ENCODE measurements at regions of chr2 and their contacts with region 1.

Region 1: DNA sequence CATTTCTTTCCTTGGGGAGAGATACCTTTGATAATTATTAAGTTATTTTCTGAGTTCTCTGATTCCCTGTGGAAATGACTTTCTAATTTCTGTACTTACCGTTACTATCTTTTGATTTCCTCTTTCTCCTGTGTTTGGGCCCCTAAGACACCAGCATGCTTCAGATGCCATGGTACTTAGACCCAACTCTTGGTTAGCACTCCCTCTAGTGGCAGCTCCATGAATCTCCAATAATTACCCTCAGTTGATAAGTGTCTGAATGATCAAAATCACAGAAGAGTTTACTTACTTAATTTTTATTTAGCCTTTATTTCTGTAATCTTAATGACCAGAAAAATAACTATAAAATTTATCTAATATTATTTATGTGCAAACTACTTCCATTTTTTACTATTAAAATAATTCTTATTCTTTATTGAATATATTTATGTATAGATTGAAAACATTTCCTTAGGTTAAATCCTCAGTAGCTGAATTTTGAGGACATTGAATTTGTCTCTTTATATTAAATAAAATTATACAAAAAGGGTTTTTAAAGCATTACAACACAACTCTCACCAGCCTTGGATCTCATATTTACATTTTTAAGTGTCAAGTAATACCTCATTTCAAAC is 300.4 kb downstream of the KCNS3 start:
- DNase-seq: peak; percentile 79
- ATAC-seq: peak; percentile 59; the same call in 1 of the 2 replicates
- H3K4me3 ChIP-seq: no peak overlapping the region
- H3K27ac ChIP-seq: peak overlapping the region; percentile 85; the same call in 1 of the 2 replicates
- H3K4me1 ChIP-seq: peaks cover 19% of the 10 kb centered on the region
- H3K27me3 ChIP-seq: no peaks in the 10 kb centered on the region
- CTCF ChIP-seq: peak; percentile 80

Region 2: DNA sequence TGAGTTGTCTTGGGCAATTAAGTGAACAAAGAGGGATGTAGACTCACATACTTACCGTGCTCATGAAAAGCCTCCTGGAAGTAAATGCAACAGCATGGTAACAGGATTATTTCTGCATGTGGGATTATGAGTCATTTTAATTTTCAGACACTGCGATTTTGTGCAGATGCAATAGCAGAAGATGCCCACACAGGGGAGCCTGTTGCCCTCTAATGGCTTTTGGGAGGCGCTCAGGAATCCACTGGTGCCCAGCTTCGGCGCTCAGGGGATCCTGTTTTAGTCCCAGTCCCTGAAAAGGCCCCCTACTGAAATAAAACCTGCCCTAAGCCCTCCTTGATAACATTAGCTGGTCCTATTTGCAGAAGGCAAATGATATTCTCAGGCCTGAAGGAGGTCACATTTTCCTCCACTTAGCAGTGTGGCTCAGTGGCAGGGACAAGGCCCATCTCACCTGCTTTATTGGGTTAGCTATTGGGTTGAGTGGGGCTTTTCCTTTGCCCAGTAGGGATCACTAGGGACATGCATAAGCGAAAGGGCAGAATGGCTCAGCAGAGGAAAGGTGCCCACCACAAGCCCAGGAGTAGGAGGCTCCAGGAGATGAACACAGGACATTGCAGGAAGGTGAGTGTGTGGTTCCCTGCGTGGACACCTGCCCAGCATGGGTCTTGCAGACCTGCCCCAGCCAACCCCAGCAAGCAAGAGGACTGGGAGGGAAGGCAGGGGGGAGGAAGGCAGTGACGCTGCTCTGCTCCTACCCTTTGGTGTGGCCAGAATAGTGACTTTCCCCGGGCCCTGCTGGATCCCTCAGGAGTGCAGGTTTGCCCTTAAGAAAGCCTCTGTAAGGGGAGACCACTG is 326.9 kb before region 1 on chr2:
- CTCF ChIA-PET with region 1: no interaction called
- POLR2A ChIA-PET with region 1: no interaction called
- intact Hi-C with region 1: loop called (anchors 1 kb)
- DNase-seq: peak; percentile 79
- ATAC-seq: peak; percentile 88
- H3K4me3 ChIP-seq: no peak overlapping the region
- H3K27ac ChIP-seq: no peak overlapping the region
- H3K4me1 ChIP-seq: no peaks in the 10 kb centered on the region
- H3K27me3 ChIP-seq: peaks cover 3% of the 10 kb centered on the region; the same call in 1 of the 2 replicates
- CTCF ChIP-seq: peak; percentile 92

Region 3: DNA sequence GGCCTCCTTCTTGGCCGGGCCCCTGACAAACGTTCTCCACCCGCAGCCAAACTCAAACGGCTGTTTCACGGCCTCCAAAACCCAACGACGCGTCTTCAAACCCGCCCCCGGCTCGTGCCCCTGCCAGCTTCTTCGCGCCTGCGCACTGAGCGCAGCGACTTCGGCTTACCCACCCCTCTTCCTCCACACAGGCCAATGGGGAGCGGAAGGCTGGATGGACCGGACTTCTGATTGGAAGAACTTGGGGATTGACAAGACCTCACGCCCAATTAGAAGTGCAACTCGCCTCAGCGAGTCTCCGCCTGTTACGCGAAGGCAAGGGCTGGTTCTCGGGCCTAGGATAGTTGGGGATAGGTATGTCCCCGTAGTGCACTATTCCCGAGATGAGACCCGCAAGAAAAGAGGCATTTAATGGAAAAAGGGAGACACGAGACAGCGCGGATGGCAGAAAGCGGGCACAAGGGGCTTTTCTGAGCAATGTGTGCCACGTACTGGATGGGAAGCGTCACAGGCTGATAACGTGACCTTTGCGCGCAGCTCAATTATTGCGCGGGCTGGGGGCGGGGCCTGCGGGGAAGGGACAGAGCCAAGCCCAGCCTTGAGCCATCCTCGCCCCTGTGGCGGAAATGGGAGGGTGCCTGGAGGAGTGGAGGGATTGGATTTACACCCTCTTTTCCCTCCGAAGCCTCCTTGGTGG is 1872.8 kb after region 1 on chr2 and contains the start of gene LAPTM4A:
- CTCF ChIA-PET with region 1: no interaction called
- POLR2A ChIA-PET with region 1: interaction called, 17 read pairs
- intact Hi-C with region 1: no loop called
- DNase-seq: peak; percentile 99
- ATAC-seq: peak; percentile 92
- H3K4me3 ChIP-seq: peak within 1 kb of the TSS; percentile 79
- H3K27ac ChIP-seq: peak within 1 kb of the TSS; percentile 91
- H3K4me1 ChIP-seq: peaks cover 33% of the 10 kb centered on the region
- H3K27me3 ChIP-seq: no peaks in the 10 kb centered on the region
- CTCF ChIP-seq: no peak
- total RNA-seq, gene LAPTM4A: 54.5 and 62.7 TPM in 2 replicates